GM10248 (cell line): ENCODE measurements at regions of chr1 and their contacts with region 1.

Region 1: GRCh38 chr1:15128520-15129313 is 24.8 kb upstream of the TMEM51 start:
- DNase-seq: peak; percentile 86
- CTCF ChIP-seq: peak; percentile 97

Region 2: GRCh38 chr1:14755518-14756252 is 373.0 kb before region 1 on chr1:
- CTCF ChIA-PET with region 1: no interaction called
- POLR2A ChIA-PET with region 1: no interaction called
- DNase-seq: no peak
- CTCF ChIP-seq: no peak

Region 3: DNA sequence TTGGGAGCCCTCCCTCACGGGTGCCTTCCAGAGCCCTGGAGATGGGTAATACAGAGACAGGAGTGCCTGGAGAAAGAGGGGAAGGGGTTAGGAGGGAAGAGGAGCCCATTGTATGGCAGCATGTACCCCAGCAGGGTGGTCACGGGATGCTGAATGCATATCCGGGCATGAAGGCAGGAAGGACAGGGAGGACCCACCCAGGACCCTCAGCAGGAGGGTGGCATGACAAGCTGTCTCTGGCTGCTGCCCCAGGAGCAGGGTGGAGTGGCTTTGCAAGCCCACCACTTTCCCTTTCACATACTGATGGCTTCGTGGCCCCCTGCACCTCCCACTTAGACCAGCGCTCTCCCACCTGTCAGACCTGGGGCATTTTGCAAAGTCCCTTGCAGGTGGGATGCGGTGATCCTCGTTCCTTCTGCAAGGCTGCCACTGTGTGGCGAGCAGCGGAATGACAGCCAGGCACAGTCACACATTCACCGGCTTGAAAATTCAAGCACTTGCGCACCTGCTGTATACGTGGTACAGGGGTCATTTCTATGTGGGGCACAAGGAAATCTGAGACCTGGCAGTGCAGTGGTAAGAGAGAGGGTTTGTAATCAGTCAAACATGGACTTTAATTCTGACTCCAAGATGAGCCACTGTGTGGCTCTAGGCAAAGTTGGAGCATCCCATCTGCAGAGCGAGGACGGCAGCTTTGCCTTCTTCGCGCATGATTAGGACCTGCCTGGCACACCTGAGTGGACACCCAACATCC is 28.4 kb before region 1 on chr1:
- CTCF ChIA-PET with region 1: interaction called, 11 read pairs
- POLR2A ChIA-PET with region 1: no interaction called
- DNase-seq: peak; percentile 73
- CTCF ChIP-seq: peak; percentile 96

Region 4: DNA sequence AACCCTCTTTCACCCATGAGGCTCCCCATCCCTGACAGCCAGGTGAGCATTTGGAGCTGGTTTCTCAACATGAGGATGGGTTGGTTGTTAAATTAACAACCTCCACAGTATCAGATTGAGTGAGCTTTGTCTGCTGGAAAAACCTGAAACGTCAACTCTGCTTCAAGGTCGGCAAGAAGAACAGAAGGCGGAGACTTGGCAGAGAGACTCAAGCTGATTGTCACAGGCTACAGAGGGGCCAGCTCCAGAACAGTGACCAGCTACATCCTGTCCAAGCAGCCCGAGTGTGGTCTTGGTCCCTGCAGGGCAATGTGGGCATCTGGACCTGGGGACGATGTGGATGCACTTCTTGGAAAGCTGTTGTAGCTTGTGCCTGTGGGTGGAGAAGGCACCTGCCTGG is 11.8 kb before region 1 on chr1:
- CTCF ChIA-PET with region 1: interaction called, 27 read pairs
- POLR2A ChIA-PET with region 1: no interaction called
- DNase-seq: no peak
- CTCF ChIP-seq: no peak

Region 5: GRCh38 chr1:15139654-15140350 is 11.1 kb after region 1 on chr1:
- CTCF ChIA-PET with region 1: interaction called, 26 read pairs
- POLR2A ChIA-PET with region 1: no interaction called
- DNase-seq: no peak
- CTCF ChIP-seq: no peak

Region 6: GRCh38 chr1:15155888-15156741 is 27.4 kb after region 1 on chr1:
- CTCF ChIA-PET with region 1: interaction called, 13 read pairs
- POLR2A ChIA-PET with region 1: no interaction called
- DNase-seq: peak; percentile 45
- CTCF ChIP-seq: no peak

Region 7: GRCh38 chr1:15272009-15272788 is 143.5 kb after region 1 on chr1:
- CTCF ChIA-PET with region 1: interaction called, 65 read pairs
- POLR2A ChIA-PET with region 1: no interaction called
- DNase-seq: peak; percentile 80
- CTCF ChIP-seq: peak; percentile 79

Region 8: GRCh38 chr1:15304701-15305467 is 176.2 kb after region 1 on chr1:
- CTCF ChIA-PET with region 1: interaction called, 27 read pairs
- POLR2A ChIA-PET with region 1: no interaction called
- DNase-seq: peak; percentile 66
- CTCF ChIP-seq: peak; percentile 73